Activated naive CD4-positive, alpha-beta T cell treated with anti-CD3 and anti-CD28 coated beads for 36 hours (primary cell): ENCODE measurements at regions of chr10 and their contacts with region 1.

Region 1: DNA sequence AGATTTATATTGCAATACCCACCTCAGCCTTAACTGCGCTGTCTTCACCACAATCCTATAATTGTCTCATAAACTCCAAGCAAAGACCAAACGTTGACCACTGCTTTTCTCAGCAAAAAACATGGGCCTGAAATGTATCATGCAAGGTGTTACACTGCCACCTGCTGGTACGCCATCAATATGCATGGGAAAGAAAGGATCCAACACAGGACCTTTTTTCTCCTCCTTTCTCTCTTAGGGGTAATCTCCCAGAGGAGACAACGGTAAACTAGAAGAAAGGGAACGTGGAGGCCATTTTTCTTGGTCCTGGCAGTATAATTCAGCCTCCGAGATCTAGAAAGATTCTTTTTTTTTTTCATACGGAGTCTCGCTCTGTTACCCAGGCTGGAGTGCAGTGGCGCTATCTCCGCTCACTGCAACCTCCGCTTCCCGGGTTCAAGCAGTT is 79.1 kb upstream of the MPP7 start:
- DNase-seq: peak; percentile 93
- H3K4me3 Mint-ChIP-seq: no peak overlapping the region
- H3K27ac Mint-ChIP-seq: no peak overlapping the region
- H3K4me1 Mint-ChIP-seq: peaks cover 36% of the 10 kb centered on the region
- H3K27me3 Mint-ChIP-seq: no peaks in the 10 kb centered on the region

Region 2: DNA sequence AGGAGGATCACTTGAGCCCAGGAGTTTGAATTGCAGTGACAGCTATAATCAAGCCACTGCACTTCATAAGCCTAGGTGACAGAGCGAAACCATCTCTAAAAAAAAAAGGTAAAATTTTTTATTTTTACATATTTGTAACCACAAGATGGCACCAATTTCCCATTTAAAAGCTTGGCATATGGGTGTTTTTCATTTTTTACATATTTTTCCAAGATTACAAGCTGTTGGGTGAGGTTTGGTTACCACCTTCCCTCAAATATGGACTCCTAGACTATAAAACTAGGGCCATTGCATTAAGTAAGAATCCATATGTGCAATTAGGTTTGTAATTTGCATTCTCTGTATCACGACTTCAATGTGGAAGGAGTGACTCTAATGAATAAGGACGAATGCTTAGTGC is 1012.0 kb before region 1 on chr10:
- CTCF ChIA-PET with region 1: no interaction called
- intact Hi-C with region 1: loop called (anchors 10 kb)
- DNase-seq: no peak
- H3K4me3 Mint-ChIP-seq: no peak overlapping the region
- H3K27ac Mint-ChIP-seq: no peak overlapping the region
- H3K4me1 Mint-ChIP-seq: peaks cover 12% of the 10 kb centered on the region
- H3K27me3 Mint-ChIP-seq: no peaks in the 10 kb centered on the region

Region 3: DNA sequence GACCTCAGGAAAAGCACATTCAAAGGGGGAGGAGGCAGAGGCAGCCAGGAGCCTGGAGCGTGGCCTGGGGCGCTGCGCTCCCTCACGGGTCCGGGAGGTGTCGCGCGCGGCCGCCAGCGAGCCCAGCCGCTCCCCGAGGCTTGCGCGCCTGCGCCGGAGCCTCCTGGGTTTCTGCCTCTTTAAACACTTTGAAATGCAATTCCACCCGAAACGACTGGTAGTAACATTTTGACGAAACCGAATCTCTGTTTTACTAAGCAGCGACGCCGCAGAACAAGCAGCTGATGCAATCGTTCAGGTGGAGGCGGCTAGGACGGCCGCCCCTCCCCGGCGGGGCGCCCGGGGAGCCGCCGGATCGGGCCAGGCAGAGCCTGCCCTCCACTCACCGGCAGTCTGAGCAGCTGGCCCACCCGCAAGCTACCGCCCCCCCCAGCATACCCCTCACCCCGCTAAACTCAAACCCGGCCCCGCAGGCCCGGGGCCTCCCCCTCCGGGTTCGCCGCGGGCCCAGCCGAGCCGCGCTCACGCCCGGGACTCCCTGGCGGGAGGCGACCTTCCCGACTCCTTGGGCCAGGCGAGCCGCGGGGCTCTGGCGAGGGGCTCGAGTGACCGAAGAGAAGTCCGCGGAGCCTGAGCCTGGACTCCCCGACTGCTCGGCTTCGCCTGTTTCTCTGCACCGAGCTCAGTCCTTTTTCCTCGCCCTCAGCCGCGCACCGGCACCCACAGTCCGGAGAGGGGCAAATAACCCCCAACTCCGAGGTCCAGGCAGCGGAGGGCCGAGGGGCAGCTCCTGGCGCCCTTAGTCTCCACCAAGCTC is 639.5 kb before region 1 on chr10:
- CTCF ChIA-PET with region 1: interaction called, 15 read pairs
- intact Hi-C with region 1: loop called (anchors 1 kb)
- DNase-seq: peak; percentile 88
- H3K4me3 Mint-ChIP-seq: peak overlapping the region; percentile 68
- H3K27ac Mint-ChIP-seq: no peak overlapping the region
- H3K4me1 Mint-ChIP-seq: peaks cover 31% of the 10 kb centered on the region
- H3K27me3 Mint-ChIP-seq: peaks cover 49% of the 10 kb centered on the region

Region 4: GRCh38 chr10:28179006-28179742 is 202.8 kb before region 1 on chr10:
- CTCF ChIA-PET with region 1: interaction called, 6 read pairs
- intact Hi-C with region 1: loop called (anchors 1 kb)
- DNase-seq: peak; percentile 58
- H3K4me3 Mint-ChIP-seq: no peak overlapping the region
- H3K27ac Mint-ChIP-seq: peak overlapping the region; percentile 81
- H3K4me1 Mint-ChIP-seq: peaks cover 44% of the 10 kb centered on the region
- H3K27me3 Mint-ChIP-seq: no peaks in the 10 kb centered on the region

Region 5: DNA sequence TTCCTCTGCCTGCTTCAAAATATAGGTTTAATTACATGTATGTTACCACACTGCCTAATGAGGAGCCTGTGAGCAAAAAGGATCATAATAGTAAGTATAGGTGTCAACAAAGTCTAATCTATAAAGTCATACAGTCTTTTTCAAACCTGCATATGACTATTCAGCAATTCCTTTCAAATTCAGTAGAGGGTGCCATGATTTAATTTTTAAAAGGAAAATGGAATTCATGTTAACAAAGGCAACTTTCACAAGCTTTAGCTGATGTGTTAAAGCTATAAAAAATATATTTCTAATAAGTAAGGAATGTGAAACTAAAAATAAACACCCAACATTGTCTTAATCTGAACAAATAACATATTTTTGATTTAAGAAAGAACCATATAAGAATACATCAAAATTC is 131.1 kb before region 1 on chr10:
- CTCF ChIA-PET with region 1: interaction called, 177 read pairs
- intact Hi-C with region 1: loop called (anchors 1 kb)
- DNase-seq: no peak
- H3K4me3 Mint-ChIP-seq: no peak overlapping the region
- H3K27ac Mint-ChIP-seq: no peak overlapping the region
- H3K4me1 Mint-ChIP-seq: peaks cover 47% of the 10 kb centered on the region
- H3K27me3 Mint-ChIP-seq: no peaks in the 10 kb centered on the region

Region 6: GRCh38 chr10:28317760-28318159 is 64.2 kb before region 1 on chr10:
- CTCF ChIA-PET with region 1: interaction called, 12 read pairs
- intact Hi-C with region 1: no loop called
- DNase-seq: no peak
- H3K4me3 Mint-ChIP-seq: no peak overlapping the region
- H3K27ac Mint-ChIP-seq: no peak overlapping the region
- H3K4me1 Mint-ChIP-seq: peaks cover 11% of the 10 kb centered on the region
- H3K27me3 Mint-ChIP-seq: no peaks in the 10 kb centered on the region

Region 7: GRCh38 chr10:28367929-28368484 is 13.9 kb before region 1 on chr10:
- CTCF ChIA-PET with region 1: interaction called, 55 read pairs
- intact Hi-C with region 1: loop called (anchors 1 kb)
- DNase-seq: peak; percentile 78
- H3K4me3 Mint-ChIP-seq: peak overlapping the region; percentile 49
- H3K27ac Mint-ChIP-seq: peak overlapping the region; percentile 91
- H3K4me1 Mint-ChIP-seq: peaks cover 44% of the 10 kb centered on the region
- H3K27me3 Mint-ChIP-seq: no peaks in the 10 kb centered on the region